ENCODE measurements at regions of chr17 and their contacts with region 1.

Region 1: DNA sequence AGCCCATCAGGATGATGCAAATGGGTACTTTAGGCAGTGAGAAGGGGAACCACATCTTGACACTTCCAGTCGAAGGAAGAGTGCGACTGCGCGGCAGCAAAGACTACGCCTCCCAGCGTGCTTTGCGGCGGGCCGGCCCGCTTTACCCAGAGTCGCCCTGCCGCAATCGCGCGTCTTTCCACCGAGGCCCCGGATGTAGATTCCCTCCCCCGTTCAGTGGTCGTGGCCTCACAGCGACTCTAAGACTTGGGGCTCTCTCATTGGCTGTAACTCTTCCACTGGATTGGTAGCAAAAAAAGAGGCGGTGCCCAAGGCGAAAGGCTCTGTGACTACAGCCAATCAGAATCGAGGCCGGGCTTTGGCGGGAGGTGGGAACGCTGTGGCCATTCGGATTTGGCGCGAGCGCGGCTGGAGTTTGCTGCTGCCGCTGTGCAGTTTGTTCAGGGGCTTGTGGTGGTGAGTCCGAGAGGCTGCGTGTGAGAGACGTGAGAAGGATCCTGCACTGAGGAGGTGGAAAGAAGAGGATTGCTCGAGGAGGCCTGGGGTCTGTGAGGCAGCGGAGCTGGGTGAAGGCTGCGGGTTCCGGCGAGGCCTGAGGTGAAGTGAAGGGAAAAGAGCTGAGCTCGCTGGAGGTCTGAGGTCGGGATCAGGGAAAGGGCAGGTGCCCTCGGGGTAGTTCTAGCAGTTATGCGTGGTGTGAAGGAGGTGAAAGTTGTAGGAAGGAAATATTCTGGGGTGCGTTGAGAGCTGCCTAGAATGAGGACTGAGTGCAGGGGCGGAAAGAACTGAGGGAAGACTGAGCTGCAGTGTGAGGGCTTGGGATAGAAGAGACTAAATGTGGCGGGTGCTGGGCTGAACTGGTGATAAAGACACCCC is at the start of gene CDC6:
- DNase-seq: peak; percentile 96 to 98
- H3K4me3 ChIP-seq: peak within 1 kb of the TSS; percentile 89 to 100 (median 96)
- H3K27ac ChIP-seq: peak within 1 kb of the TSS; percentile 94
- H3K4me1 ChIP-seq: peaks cover 0 to 6% (median 4%) of the 10 kb centered on the region in 4 experiments; a peak in 2 of 7 replicates
- H3K27me3 ChIP-seq: no peaks in the 10 kb centered on the region
- CTCF ChIP-seq: no peak
- EP300 ChIP-seq: no peak
- POLR2A ChIP-seq: peak; percentile 91 to 92
- RAD21 ChIP-seq: no peak
- total RNA-seq, gene CDC6: 139 and 140 TPM in 2 replicates

Region 2: DNA sequence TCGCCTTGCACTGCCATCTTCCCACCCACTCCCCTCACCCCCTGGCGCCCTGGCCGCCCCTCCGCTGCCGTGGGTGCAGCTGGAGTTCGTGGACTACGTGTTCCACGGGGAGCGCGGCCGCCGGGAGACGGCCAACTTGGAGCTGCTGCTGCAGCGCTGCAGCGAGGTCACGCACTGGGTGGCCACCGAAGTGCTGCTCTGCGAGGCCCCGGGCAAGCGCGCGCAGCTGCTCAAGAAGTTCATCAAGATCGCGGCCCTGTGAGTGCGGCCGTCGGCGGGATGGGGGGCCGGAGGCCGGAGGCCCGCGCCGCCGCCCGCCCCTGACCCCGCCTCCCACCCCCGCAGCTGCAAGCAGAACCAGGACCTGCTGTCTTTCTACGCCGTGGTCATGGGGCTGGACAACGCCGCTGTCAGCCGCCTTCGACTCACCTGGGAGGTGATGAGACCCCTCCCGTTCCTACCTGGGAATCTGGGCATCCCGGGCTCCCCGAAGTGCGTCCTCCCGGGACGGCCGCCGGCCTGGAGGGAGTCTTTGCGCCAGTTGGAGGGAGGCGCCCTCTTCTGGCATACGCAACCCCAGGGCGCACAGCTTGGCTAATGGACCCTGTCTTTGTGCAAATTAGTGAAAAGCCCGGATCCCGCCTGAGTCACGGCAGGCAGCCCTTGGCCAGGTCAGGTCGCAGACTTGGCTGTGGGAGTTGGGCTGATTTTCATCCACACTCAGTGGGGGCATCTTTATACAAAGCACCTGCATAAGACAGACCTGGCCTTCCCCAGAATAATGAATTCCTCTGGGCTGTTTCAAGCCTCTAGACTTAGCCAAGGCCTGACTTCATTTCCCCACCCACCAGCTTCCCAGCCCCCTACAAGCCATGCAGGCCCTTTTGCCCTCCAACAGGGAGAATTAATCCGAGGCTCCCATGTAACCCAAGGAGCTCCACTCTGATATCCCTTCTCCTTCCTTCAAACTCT is 96.2 kb before region 1 on chr17:
- CTCF ChIA-PET with region 1: interaction called, 10 read pairs
- POLR2A ChIA-PET with region 1: interaction called, 5 read pairs
- DNase-seq: peak; percentile 70 to 87
- H3K4me3 ChIP-seq: peak overlapping the region; percentile 20 to 73 (median 44)
- H3K27ac ChIP-seq: no peak overlapping the region
- H3K4me1 ChIP-seq: peaks cover 0 to 15% (median 8%) of the 10 kb centered on the region in 4 experiments; a peak in 5 of 7 replicates
- H3K27me3 ChIP-seq: no peaks in the 10 kb centered on the region
- CTCF ChIP-seq: peak; percentile 58 to 73 (median 71)
- EP300 ChIP-seq: no peak
- POLR2A ChIP-seq: no peak
- RAD21 ChIP-seq: peak; percentile 32 to 60

Region 3: DNA sequence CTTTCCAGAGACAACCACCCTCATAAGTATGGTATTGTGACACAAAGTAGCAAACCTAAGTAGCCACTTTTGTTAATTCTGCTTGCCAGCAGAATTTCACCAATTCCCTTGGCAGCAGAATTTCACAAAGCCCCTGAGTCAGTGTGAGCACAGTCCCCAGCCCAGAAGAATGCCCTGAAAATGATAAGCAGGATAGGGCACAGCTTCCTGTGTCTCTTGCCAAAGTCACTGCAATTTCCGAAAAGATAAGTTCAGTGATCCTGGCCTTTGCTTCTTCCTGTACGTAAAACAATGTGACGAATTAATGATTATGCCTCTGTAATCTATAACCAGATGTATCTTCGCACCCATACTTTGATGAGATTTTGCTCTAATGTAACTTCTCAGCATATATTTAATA is 84.6 kb before region 1 on chr17:
- CTCF ChIA-PET with region 1: interaction called, 25 read pairs
- POLR2A ChIA-PET with region 1: interaction called, 7 read pairs
- DNase-seq: no peak
- H3K4me3 ChIP-seq: no peak overlapping the region
- H3K27ac ChIP-seq: no peak overlapping the region
- H3K4me1 ChIP-seq: no peaks in the 10 kb centered on the region
- H3K27me3 ChIP-seq: no peaks in the 10 kb centered on the region
- CTCF ChIP-seq: no peak
- EP300 ChIP-seq: no peak
- POLR2A ChIP-seq: no peak
- RAD21 ChIP-seq: no peak

Region 4: DNA sequence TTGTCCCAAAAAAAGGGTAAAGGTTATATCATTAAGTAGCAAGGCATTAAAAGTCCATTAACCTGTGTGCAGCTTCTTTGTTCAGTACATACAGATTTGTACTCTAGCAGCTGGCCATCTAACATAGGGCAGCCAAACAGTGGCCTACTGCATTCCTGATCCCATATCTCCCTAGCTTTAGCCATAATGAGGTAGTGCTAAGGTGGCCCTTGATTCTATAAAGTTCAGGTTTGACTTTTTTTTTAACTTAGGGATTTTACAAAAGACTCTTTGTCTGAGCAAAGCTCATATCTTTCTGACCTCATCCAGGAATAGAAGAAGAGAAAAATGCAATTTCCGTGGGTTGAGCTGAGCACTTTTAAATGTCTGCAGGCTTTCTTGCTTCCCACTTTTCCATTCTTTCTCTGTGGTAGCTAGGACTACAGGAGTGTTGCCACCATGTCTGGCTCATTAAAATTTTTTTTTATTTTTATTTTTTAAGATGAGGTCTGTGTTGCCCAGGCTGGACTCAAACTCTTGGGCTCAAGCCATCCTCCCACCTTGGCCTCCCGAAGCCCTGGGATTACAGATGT is 19.5 kb before region 1 on chr17:
- CTCF ChIA-PET with region 1: interaction called, 5 read pairs
- POLR2A ChIA-PET with region 1: interaction called, 18 read pairs
- DNase-seq: no peak
- H3K4me3 ChIP-seq: no peak overlapping the region
- H3K27ac ChIP-seq: no peak overlapping the region
- H3K4me1 ChIP-seq: peaks cover 0 to 2% (median 0%) of the 10 kb centered on the region in 4 experiments; a peak in 1 of 7 replicates
- H3K27me3 ChIP-seq: no peaks in the 10 kb centered on the region
- CTCF ChIP-seq: no peak
- EP300 ChIP-seq: no peak
- POLR2A ChIP-seq: no peak
- RAD21 ChIP-seq: no peak

Region 5: GRCh38 chr17:40303009-40303657 is 15.4 kb after region 1 on chr17:
- CTCF ChIA-PET with region 1: interaction called, 14 read pairs
- POLR2A ChIA-PET with region 1: interaction called, 540 read pairs
- DNase-seq: no peak
- H3K4me3 ChIP-seq: no peak overlapping the region
- H3K27ac ChIP-seq: no peak overlapping the region
- H3K4me1 ChIP-seq: peaks cover 10 to 19% (median 16%) of the 10 kb centered on the region in 4 experiments
- H3K27me3 ChIP-seq: peaks cover 0 to 1% (median 0%) of the 10 kb centered on the region in 4 experiments; a peak in 1 of 7 replicates
- CTCF ChIP-seq: peak in 2 of 3 experiments; percentile 65 to 66; a peak in 3 of 4 replicates
- EP300 ChIP-seq: no peak
- POLR2A ChIP-seq: peak in 1 of 2 experiments; percentile 57; a peak in 1 of 3 replicates
- RAD21 ChIP-seq: peak; percentile 79 to 86

Region 6: DNA sequence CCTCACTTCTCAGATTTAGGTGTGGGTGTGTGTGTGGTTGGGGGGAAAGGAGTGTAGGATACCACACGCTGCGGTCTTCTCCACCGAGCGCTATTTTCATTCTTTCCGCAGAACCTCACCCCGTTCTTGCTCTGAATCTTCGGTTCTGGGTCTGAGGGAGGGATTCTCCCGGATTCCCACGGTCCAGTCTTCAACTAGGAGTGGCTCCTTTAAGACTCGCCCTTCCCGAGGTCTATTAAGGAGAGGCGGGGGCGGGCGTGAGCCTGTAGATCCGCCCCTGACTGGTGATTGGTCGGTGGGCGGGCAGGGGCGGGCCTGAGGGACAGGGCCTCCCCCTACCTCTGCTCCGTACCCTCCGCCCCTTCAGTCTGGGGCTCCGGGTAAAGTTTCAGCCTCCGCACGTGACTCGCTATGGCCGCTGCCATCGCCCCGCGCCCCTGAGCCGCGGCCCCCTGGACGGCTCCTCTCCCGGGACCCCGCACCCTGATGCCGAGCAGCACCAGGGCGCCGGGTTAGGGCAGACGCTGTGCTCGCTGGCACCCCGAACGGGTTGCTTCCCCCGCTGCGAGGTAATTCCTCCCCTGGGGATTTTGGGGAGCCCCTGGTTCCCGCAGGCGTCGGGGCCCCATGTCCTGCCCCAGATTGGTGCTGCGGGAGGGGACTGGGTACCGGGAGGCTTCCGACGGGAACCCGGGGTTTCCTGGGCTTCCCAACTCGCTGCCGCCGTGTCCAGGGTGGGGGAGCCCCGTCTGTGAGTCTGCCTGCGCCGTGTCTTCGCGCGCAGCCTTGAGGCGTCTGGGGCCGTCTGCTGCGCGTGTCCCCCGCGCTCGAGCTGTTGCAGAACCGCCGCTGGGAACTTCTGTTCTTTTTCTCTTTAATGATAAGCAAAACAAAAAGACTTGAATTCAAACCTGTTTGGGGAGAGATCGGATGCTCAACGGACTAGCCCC is 30.4 kb after region 1 on chr17:
- CTCF ChIA-PET with region 1: interaction called, 7 read pairs
- POLR2A ChIA-PET with region 1: interaction called, 540 read pairs
- DNase-seq: peak; percentile 81 to 88
- H3K4me3 ChIP-seq: peak overlapping the region; percentile 55 to 81 (median 71)
- H3K27ac ChIP-seq: no peak overlapping the region
- H3K4me1 ChIP-seq: peaks cover 0 to 40% (median 30%) of the 10 kb centered on the region in 4 experiments; a peak in 6 of 7 replicates
- H3K27me3 ChIP-seq: peaks cover 0 to 30% (median 16%) of the 10 kb centered on the region in 4 experiments; a peak in 5 of 7 replicates
- CTCF ChIP-seq: no peak
- EP300 ChIP-seq: no peak
- POLR2A ChIP-seq: peak in 1 of 2 experiments; percentile 41; a peak in 1 of 3 replicates
- RAD21 ChIP-seq: no peak

Region 7: DNA sequence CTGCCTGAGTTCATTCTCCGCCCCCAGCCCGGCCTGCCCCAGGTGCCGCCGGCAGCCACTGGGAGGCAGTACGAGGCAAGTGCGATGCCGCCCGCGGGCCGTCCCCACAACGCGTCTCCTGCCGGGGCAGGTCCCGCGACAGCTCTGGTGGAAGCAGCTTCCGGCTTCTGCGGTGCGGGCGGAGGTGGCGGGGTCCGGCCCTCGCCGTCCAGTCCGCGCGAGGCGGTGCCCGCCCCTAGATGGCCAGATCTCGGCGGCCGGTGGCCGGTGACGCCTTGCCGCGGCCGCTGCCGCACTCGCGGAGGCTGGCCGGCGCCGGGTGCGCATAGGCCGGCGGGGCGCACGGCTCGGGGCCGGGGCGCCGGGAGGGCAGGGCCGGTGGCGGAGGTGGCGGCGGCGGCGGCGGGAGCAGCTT is 75.0 kb after region 1 on chr17:
- CTCF ChIA-PET with region 1: interaction called, 4 read pairs
- POLR2A ChIA-PET with region 1: interaction called, 570 read pairs
- DNase-seq: peak in 1 of 2 experiments; percentile 94
- H3K4me3 ChIP-seq: peak overlapping the region; percentile 21 to 65 (median 42); a peak in 7 of 8 replicates
- H3K27ac ChIP-seq: no peak overlapping the region
- H3K4me1 ChIP-seq: peaks cover 6 to 34% (median 23%) of the 10 kb centered on the region in 4 experiments
- H3K27me3 ChIP-seq: peaks cover 8 to 27% (median 24%) of the 10 kb centered on the region in 4 experiments
- CTCF ChIP-seq: peak; percentile 81 to 96 (median 86)
- EP300 ChIP-seq: no peak
- POLR2A ChIP-seq: no peak
- RAD21 ChIP-seq: peak; percentile 73 to 78